ENCODE measurements at regions of chr12 and their contacts with region 1.

Region 1: GRCh38 chr12:104790296-104791125 is 167.6 kb downstream of the SLC41A2 start:
- ATAC-seq: peak in 5 of 8 experiments; percentile 34 to 60 (median 41)
- H3K4me3 ChIP-seq: no peak overlapping the region
- H3K27ac ChIP-seq: no peak overlapping the region
- H3K4me1 ChIP-seq: peaks cover 5 to 10% of the 10 kb centered on the region in 2 donors

Region 2: GRCh38 chr12:104411826-104412641 is 378.5 kb before region 1 on chr12:
- in situ Hi-C with region 1: no loop called
- ATAC-seq: peak in 1 of 8 experiments; percentile 28
- H3K4me3 ChIP-seq: no peak overlapping the region
- H3K27ac ChIP-seq: no peak overlapping the region
- H3K4me1 ChIP-seq: no peaks in the 10 kb centered on the region

Region 3: DNA sequence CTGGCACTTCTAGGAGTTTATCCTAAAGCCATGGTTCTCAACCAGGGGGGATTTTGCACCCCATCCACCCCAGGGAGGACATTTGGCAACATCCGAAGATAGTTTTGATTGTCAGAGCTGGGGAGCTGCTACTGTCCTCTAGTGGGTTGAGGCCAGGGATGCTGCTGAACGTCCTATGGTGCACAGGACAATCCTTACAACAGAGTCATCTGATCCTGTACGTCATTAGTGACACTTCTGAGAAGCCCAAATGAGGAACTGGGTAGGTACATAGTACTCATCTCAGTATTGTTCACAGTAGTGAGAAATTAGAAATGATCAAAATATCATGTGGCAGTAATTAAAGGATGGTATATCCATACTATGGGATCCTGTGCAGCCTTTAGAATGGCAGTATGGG is 148.6 kb before region 1 on chr12:
- in situ Hi-C with region 1: no loop called
- ATAC-seq: no peak
- H3K4me3 ChIP-seq: no peak overlapping the region
- H3K27ac ChIP-seq: no peak overlapping the region
- H3K4me1 ChIP-seq: no peaks in the 10 kb centered on the region

Region 4: DNA sequence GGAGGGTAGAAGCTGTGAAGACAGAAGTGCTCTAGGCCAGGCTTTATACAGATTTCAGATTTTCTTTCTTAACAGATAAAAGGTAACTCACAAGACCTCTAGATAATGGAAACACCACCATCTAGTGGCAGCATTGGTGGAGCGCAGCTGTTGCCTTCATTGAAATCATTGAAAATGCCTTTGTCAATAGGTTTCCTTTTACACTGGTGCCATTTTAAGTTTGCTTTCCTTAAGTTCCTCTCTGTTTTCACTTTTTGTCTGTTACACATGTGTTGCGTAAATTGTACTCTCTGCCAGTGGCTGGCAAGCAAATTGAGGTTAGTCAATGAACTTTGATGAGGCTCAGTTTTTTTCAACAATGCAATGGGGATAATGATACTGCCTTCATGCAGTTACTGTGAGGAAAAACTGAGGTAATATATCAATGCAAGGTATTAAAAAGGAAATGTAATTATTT is 262.6 kb after region 1 on chr12:
- in situ Hi-C with region 1: loop called in 1 of 9 experiments (anchors 25 kb)
- ATAC-seq: peak; percentile 40 to 79 (median 70)
- H3K4me3 ChIP-seq: no peak overlapping the region
- H3K27ac ChIP-seq: no peak overlapping the region
- H3K4me1 ChIP-seq: no peaks in the 10 kb centered on the region